Activated CD8-positive, alpha-beta memory T cell treated with anti-CD3 and anti-CD28 coated beads, Interleukin-2, amount 10 ng/mL, durations not matched to agents 7 days and 5 days (primary cell): ENCODE measurements at regions of chr17 and their contacts with region 1.

Region 1: DNA sequence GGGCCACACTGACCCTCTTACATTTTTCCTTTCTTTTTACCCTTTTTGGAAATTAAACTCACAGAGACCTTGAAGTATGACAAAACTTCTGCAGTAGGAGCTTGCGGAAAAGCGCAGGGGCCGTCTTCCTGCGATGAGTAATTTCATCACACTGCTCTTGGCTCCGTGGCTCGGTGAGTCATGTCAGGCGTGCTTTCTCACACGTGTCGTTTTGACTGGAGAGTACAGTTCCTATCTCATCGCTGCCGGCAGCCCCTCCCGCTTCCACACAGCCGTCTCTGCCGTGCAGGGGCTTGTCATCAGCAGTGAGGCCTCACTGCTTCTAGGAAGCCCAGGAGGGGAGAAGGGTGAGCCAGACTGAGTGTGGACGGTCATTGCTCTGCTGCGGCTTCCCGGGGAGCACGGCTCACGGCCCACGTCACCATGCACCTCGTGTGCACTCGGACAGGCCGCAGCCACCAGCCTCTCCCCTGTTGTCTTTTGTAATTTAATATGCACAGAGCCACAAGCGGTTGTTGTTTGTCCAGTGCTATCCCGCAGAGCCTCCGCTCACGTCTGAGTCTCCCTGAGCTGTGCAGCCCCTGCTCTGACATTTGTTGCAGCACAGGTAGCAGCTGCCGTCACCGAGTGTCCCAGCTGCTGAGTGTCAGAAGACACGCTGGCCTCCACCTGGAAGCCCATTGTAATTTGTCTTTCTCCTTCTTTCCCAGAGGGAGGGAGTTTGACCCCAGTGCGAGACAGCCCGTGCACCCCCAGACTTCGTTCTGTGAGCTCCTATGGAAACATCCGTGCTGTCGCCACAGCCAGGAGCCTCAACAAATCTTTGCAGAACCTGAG is 99.4 kb upstream of the CHMP6 start:
- DNase-seq: peak; percentile 99
- ATAC-seq: peak; percentile 82
- H3K4me3 Mint-ChIP-seq: peak overlapping the region; percentile 85
- H3K27ac Mint-ChIP-seq: peak overlapping the region; percentile 96
- H3K4me1 Mint-ChIP-seq: peaks cover 86% of the 10 kb centered on the region
- H3K27me3 Mint-ChIP-seq: no peaks in the 10 kb centered on the region

Region 2: GRCh38 chr17:80761110-80761871 is 130.9 kb before region 1 on chr17:
- CTCF ChIA-PET with region 1: interaction called, 10 read pairs
- DNase-seq: peak; percentile 88
- ATAC-seq: peak; percentile 86
- H3K4me3 Mint-ChIP-seq: peak overlapping the region; percentile 68
- H3K27ac Mint-ChIP-seq: peak overlapping the region; percentile 98
- H3K4me1 Mint-ChIP-seq: peaks cover 78% of the 10 kb centered on the region
- H3K27me3 Mint-ChIP-seq: no peaks in the 10 kb centered on the region

Region 3: GRCh38 chr17:80791758-80792284 is 100.4 kb before region 1 on chr17:
- CTCF ChIA-PET with region 1: interaction called, 19 read pairs
- DNase-seq: peak; percentile 80
- ATAC-seq: peak; percentile 71
- H3K4me3 Mint-ChIP-seq: peak overlapping the region; percentile 68
- H3K27ac Mint-ChIP-seq: peak overlapping the region; percentile 98
- H3K4me1 Mint-ChIP-seq: peaks cover 66% of the 10 kb centered on the region
- H3K27me3 Mint-ChIP-seq: no peaks in the 10 kb centered on the region

Region 4: GRCh38 chr17:80832888-80833583 is 59.2 kb before region 1 on chr17:
- CTCF ChIA-PET with region 1: interaction called, 11 read pairs
- DNase-seq: peak; percentile 90
- ATAC-seq: peak; percentile 90
- H3K4me3 Mint-ChIP-seq: peak overlapping the region; percentile 83
- H3K27ac Mint-ChIP-seq: peak overlapping the region; percentile 98
- H3K4me1 Mint-ChIP-seq: peaks cover 56% of the 10 kb centered on the region
- H3K27me3 Mint-ChIP-seq: no peaks in the 10 kb centered on the region

Region 5: GRCh38 chr17:80876950-80877728 is 15.1 kb before region 1 on chr17:
- CTCF ChIA-PET with region 1: interaction called, 19 read pairs
- DNase-seq: peak; percentile 92
- ATAC-seq: peak; percentile 86
- H3K4me3 Mint-ChIP-seq: peak overlapping the region; percentile 45
- H3K27ac Mint-ChIP-seq: peak overlapping the region; percentile 98
- H3K4me1 Mint-ChIP-seq: peaks cover 76% of the 10 kb centered on the region
- H3K27me3 Mint-ChIP-seq: no peaks in the 10 kb centered on the region

Region 6: DNA sequence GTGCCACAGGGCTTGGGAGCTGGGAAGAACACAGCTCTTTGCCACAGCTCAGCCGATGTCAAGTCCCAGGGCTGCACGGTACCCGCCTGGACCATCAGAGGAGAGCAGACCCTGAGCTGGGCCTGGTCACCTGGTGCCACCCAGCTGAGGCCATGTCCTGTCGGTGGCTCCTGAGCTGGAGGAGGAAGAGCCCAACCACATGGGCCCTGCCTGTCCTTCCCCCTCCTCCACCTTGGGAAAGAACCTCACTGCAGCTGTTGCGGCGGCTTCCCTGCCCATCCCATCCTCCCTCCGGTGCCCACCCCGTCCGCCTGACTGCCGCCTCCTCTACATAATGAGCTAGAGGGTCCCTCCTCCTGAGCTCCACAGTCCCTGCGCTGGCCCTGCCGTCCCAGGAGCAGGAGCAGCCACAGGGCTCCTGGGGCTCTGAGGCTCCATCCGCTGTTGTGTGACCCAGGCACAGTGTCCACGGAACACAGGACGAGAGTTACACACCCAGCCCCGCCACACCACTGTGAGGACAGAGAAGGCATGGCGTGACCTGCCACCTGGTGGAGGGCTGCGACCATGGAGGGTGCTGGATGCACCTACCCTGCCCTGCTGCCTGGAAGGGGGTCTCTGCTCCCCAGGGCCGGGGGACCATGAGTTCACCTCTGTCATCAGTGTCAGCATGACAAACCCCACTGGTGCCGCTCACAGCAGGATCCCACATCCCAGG is 78.0 kb after region 1 on chr17:
- CTCF ChIA-PET with region 1: interaction called, 12 read pairs
- DNase-seq: peak; percentile 80
- ATAC-seq: peak; percentile 78
- H3K4me3 Mint-ChIP-seq: no peak overlapping the region
- H3K27ac Mint-ChIP-seq: peak overlapping the region; percentile 70
- H3K4me1 Mint-ChIP-seq: peaks cover 14% of the 10 kb centered on the region
- H3K27me3 Mint-ChIP-seq: peaks cover 11% of the 10 kb centered on the region

Region 7: GRCh38 chr17:81018044-81018802 is 126.0 kb after region 1 on chr17:
- CTCF ChIA-PET with region 1: no interaction called
- DNase-seq: peak; percentile 80
- ATAC-seq: peak; percentile 95
- H3K4me3 Mint-ChIP-seq: peak overlapping the region; percentile 65
- H3K27ac Mint-ChIP-seq: peak overlapping the region; percentile 90
- H3K4me1 Mint-ChIP-seq: peaks cover 33% of the 10 kb centered on the region
- H3K27me3 Mint-ChIP-seq: no peaks in the 10 kb centered on the region